Left cardiac atrium (tissue), 4 donors: ENCODE measurements at regions of chr17 and their contacts with region 1.

Region 1: GRCh38 chr17:3935140-3935542 is 18.9 kb upstream of the P2RX1 start:
- DNase-seq: peak; percentile 74
- ATAC-seq: peak; percentile 92 to 93

Region 2: GRCh38 chr17:4074831-4075495 is 139.8 kb after region 1 on chr17:
- intact Hi-C with region 1: loop called in 1 of 2 experiments (anchors 10 kb)
- DNase-seq: no peak
- ATAC-seq: peak; percentile 50 to 59